Aorta (tissue), 5 donors: ENCODE measurements at regions of chr18 and their contacts with region 1.

Region 1: DNA sequence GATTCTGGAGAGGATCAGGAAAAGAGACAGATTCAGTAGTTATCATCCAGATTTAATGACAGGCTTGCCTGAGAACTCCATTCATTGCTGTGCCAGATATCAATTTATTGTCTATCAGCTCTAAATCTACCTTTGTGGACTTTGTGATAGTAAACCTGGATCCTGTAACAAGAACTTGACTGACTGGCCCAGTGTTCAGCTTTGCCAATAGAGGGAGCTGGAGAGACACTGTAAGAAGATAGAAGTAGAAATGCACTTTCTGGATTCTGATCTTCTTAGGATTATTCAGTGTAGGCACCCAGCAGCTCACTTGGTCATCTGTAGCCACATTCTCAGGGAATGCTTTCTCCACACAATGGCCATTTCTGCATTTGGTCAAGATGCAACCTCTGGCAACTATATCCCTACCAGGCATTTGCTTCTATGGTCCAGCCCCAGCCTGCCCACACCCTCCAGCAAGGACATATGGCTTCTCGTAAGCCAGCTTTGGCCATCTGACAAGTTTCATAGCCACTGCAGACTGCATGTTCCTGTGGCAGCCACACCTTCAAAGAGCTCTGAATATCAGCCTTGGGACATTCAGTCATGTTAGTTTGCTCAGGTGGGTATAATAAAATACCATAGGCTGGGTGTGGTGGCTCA is 6.1 kb upstream of the SERPINB8 start:
- DNase-seq: no peak
- ATAC-seq: peak; percentile 76
- H3K4me3 ChIP-seq: no peak overlapping the region
- H3K27ac ChIP-seq: no peak overlapping the region
- H3K4me1 ChIP-seq: no peaks in the 10 kb centered on the region
- H3K27me3 ChIP-seq: no peaks in the 10 kb centered on the region

Region 2: DNA sequence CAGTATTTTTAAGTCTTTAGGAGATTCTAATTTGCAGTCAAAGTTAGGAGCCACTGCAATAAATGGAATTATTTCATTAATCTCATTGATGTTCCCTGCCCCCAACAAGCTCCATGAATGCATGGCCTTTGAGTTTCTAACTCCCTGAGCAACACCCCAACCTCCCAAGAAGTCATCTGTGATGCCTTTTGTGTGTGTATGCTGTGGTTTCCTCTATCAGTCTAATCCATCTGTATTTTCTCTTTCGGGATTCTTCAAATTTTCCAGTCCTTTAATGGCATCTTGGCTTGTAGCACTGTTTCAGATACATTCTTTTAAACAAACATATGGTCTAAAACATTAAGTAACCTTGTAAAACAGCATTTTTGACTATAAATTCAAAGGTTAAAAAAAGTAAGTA is 39.2 kb before region 1 on chr18:
- intact Hi-C with region 1: no loop called
- DNase-seq: no peak
- ATAC-seq: no peak
- H3K4me3 ChIP-seq: no peak overlapping the region
- H3K27ac ChIP-seq: no peak overlapping the region
- H3K4me1 ChIP-seq: no peaks in the 10 kb centered on the region
- H3K27me3 ChIP-seq: no peaks in the 10 kb centered on the region

Region 3: DNA sequence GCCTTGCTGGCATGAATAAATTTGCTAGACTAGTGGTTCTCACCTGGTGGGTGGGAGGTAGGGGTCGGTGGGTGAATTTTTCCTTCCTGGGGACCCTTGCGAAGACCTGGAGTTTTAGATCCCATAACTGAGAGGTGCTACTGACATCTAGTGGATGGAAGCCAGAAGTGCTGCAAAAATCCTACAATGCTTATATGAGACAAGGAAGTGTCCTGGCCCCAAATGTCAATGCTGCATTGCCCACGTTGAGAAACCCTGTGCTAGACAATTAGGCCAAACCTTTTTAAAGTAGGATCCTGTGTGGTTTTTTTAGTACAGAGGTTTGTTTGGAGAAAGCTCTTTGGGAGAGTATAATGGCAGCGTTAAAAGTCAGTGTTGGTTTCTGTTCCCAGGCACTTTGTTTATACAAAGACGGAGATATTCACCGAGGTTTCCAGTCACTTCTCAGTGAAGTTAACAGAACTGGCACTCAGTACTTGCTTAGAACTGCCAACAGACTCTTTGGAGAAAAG is 15.7 kb after region 1 on chr18:
- intact Hi-C with region 1: loop called in 1 of 2 experiments (anchors 2 kb)
- DNase-seq: no peak
- ATAC-seq: peak; percentile 87
- H3K4me3 ChIP-seq: peak overlapping the region; percentile 43 to 45
- H3K27ac ChIP-seq: peak overlapping the region; percentile 12 to 76
- H3K4me1 ChIP-seq: no peaks in the 10 kb centered on the region
- H3K27me3 ChIP-seq: no peaks in the 10 kb centered on the region

Region 4: GRCh38 chr18:63994783-63995399 is 31.2 kb after region 1 on chr18:
- intact Hi-C with region 1: loop called in 1 of 2 experiments (anchors 5 kb)
- DNase-seq: peak; percentile 57 to 74
- ATAC-seq: peak; percentile 79
- H3K4me3 ChIP-seq: no peak overlapping the region
- H3K27ac ChIP-seq: no peak overlapping the region
- H3K4me1 ChIP-seq: no peaks in the 10 kb centered on the region
- H3K27me3 ChIP-seq: no peaks in the 10 kb centered on the region